ENCODE measurements at regions of chr10 and their contacts with region 1.

Region 1: DNA sequence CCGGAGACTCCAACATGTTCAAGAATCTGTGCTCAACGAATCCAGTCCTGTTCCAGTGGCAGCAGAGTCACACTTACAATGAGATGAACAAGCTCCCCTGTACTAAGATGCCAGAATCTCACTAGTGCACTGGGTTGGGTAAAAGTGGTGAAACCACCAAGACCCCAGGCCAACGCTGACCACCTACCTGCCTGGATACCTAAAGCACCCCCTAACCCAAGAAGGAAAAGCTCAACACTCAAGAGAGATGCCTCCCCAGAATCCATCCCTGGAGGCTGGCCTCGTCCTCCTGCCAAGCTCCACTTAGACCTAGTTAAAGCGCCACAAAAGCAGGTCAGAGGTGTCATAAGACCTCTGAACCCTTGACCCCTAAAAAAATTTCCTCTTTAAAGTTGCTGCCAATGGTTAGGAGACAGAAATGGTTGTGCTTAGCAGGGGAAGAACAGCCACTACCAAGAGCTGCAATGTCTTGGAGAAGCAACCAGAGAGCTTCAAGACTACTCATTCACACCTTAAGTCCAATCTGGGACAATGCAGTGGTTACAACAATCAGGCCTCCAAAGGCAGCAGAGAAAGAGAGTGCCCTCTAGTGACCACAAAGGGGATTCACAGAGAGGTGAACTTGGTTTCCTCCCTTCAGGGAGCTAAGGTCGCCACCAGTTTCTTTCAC is 94.6 kb upstream of the MACROH2A2 start:
- DNase-seq: no peak
- H3K4me3 ChIP-seq: no peak overlapping the region
- H3K27ac ChIP-seq: no peak overlapping the region
- H3K4me1 ChIP-seq: peaks cover 2 to 9% (median 3%) of the 10 kb centered on the region in 4 experiments; a peak in 6 of 7 replicates
- H3K27me3 ChIP-seq: peaks cover 0 to 13% (median 5%) of the 10 kb centered on the region in 4 experiments; a peak in 3 of 7 replicates
- CTCF ChIP-seq: peak; percentile 43 to 93 (median 87)
- EP300 ChIP-seq: no peak
- POLR2A ChIP-seq: no peak
- RAD21 ChIP-seq: peak; percentile 83 to 88

Region 2: DNA sequence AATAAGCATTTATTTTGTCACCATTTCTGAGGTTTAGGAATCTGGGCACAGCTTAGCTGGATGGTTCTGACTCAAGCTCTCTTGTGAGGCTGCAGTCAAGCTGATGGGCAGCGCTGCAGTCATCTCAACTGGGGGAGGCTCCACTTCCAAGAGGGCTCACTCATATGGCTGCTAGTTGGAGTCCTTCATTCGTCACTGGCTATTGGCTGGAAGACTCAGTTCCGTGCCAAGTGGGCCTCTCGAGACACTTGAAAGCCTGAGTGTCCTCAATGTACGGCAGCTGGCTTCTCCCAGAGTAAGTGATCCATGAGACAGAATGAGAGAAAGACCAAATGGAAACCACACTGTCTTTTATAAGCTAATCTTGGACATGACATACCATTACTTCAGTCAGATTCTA is 177.9 kb before region 1 on chr10:
- CTCF ChIA-PET with region 1: interaction called, 92 read pairs
- POLR2A ChIA-PET with region 1: no interaction called
- DNase-seq: no peak
- H3K4me3 ChIP-seq: no peak overlapping the region
- H3K27ac ChIP-seq: no peak overlapping the region
- H3K4me1 ChIP-seq: no peaks in the 10 kb centered on the region
- H3K27me3 ChIP-seq: peaks cover 0 to 5% (median under 1%) of the 10 kb centered on the region in 4 experiments; a peak in 2 of 7 replicates
- CTCF ChIP-seq: no peak
- EP300 ChIP-seq: no peak
- POLR2A ChIP-seq: no peak
- RAD21 ChIP-seq: no peak

Region 3: GRCh38 chr10:69807122-69807521 is 150.9 kb before region 1 on chr10:
- CTCF ChIA-PET with region 1: interaction called, 11 read pairs
- POLR2A ChIA-PET with region 1: no interaction called
- DNase-seq: no peak
- H3K4me3 ChIP-seq: no peak overlapping the region
- H3K27ac ChIP-seq: no peak overlapping the region
- H3K4me1 ChIP-seq: peaks cover 0 to 16% (median 9%) of the 10 kb centered on the region in 4 experiments; a peak in 5 of 7 replicates
- H3K27me3 ChIP-seq: peaks cover 10 to 25% (median 20%) of the 10 kb centered on the region in 4 experiments; a peak in 6 of 7 replicates
- CTCF ChIP-seq: no peak
- EP300 ChIP-seq: no peak
- POLR2A ChIP-seq: no peak
- RAD21 ChIP-seq: no peak

Region 4: GRCh38 chr10:69936091-69936490 is 21.9 kb before region 1 on chr10:
- CTCF ChIA-PET with region 1: interaction called, 94 read pairs
- POLR2A ChIA-PET with region 1: no interaction called
- DNase-seq: no peak
- H3K4me3 ChIP-seq: no peak overlapping the region
- H3K27ac ChIP-seq: no peak overlapping the region
- H3K4me1 ChIP-seq: no peaks in the 10 kb centered on the region
- H3K27me3 ChIP-seq: no peaks in the 10 kb centered on the region
- CTCF ChIP-seq: peak; percentile 60 to 70 (median 67)
- EP300 ChIP-seq: no peak
- POLR2A ChIP-seq: no peak
- RAD21 ChIP-seq: peak; percentile 62 to 75

Region 5: GRCh38 chr10:69996611-69997010 is 38.6 kb after region 1 on chr10:
- CTCF ChIA-PET with region 1: interaction called, 10 read pairs
- POLR2A ChIA-PET with region 1: no interaction called
- DNase-seq: no peak
- H3K4me3 ChIP-seq: no peak overlapping the region
- H3K27ac ChIP-seq: no peak overlapping the region
- H3K4me1 ChIP-seq: no peaks in the 10 kb centered on the region
- H3K27me3 ChIP-seq: no peaks in the 10 kb centered on the region
- CTCF ChIP-seq: no peak
- EP300 ChIP-seq: no peak
- POLR2A ChIP-seq: no peak
- RAD21 ChIP-seq: no peak

Region 6: GRCh38 chr10:70176441-70176840 is 218.4 kb after region 1 on chr10:
- CTCF ChIA-PET with region 1: no interaction called
- POLR2A ChIA-PET with region 1: no interaction called
- DNase-seq: no peak
- H3K4me3 ChIP-seq: no peak overlapping the region
- H3K27ac ChIP-seq: no peak overlapping the region
- H3K4me1 ChIP-seq: no peaks in the 10 kb centered on the region
- H3K27me3 ChIP-seq: peaks cover 0 to 3% (median 0%) of the 10 kb centered on the region in 4 experiments; a peak in 1 of 7 replicates
- CTCF ChIP-seq: no peak
- EP300 ChIP-seq: no peak
- POLR2A ChIP-seq: no peak
- RAD21 ChIP-seq: no peak